WTC11 (cell line): ENCODE measurements at regions of chr11 and their contacts with region 1.

Region 1: DNA sequence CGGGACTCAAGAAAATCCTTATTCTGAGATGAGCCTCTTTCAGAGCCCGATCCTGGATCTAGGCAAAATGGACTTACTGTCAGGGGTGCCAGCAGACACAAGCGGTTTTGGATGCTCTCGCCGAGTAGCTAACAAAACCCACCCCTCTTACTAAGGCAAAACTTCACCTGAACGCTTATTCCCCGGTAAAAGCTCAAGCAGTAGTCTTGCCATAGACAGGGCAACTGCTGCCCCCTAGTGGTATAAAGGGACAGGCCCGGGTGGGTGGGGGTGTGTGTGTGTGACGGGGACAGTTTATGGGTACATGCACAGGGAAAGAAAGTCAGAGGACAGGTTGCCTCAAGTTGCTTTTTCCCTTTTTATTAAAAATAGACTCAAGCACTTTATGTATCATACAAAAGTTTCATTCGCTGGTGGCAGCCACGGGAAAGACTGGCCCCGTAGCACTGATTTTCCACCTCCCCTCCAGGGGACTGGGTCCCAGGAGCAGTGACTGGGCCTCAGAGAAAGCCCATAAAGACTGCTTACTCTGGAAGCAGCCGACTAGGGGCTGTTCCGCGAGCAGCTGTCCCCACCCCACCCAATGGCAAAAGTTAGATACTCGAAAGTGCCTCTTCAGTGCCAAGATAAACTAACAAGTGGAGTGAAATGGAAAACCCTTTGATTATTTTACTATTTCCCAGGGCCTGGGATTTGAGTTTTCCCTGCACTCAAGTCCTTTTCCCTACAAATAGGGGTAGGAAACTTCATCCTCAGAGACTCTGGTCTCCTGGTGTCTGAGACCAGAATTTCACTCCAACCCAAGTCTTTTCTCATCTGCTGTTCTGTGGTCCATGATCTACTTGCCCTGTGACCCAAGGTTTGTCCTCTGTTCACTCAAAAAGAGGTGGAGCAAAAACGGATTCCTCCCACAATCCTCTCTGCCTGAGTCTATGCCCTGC is 4.7 kb downstream of the YPEL4 start:
- DNase-seq: peak; percentile 96
- ATAC-seq: peak; percentile 32
- H3K4me3 Mint-ChIP-seq: peak overlapping the region; percentile 80
- H3K27ac Mint-ChIP-seq: peak overlapping the region; percentile 92
- H3K4me1 Mint-ChIP-seq: peaks cover 94% of the 10 kb centered on the region
- H3K27me3 Mint-ChIP-seq: peaks cover 14% of the 10 kb centered on the region
- CTCF ChIP-seq: peak; percentile 92

Region 2: DNA sequence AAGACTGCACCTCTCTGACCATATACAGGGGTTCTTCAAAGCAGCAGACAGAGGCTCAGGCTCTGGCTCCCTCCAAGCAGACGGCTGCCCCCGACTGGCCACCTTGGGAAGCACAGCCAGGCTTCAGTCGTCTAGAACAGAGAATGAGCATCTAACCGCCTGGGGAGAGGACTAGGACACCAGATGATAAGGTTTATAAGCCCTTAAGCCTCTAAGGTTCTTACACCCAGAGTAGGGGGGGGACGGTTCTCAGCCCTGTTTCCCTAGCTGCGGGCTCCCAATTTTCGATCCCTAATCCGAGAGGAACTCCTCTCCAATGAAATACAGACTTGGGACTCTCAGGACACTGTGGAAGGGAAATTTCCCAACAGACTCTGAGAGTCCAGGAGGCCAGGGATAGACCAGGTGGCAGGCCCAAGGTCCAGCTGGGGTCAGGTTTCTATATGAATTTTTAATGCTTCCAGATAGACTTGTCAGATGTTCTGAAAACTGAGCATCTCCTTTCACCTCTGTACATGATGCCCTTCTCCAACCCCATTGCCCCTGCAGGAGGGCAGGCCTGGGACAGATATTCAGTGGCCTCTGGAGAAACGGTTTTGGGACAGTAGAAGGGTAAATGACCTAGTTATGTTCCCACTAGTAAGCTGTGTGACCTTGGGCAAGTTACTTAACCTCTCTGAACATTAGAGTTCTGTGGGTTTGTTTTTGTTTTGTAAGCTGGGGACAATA is 164.4 kb before region 1 on chr11:
- CTCF ChIA-PET with region 1: interaction called, 15 read pairs
- POLR2A ChIA-PET with region 1: no interaction called
- DNase-seq: peak; percentile 93
- ATAC-seq: peak; percentile 60
- H3K4me3 Mint-ChIP-seq: no peak overlapping the region
- H3K27ac Mint-ChIP-seq: 0 out of 2 replicates have a peak overlapping the region, but pooled peaks have one; percentile 14
- H3K4me1 Mint-ChIP-seq: peaks cover 56% of the 10 kb centered on the region
- H3K27me3 Mint-ChIP-seq: peaks cover 74% of the 10 kb centered on the region
- CTCF ChIP-seq: peak; percentile 73

Region 3: DNA sequence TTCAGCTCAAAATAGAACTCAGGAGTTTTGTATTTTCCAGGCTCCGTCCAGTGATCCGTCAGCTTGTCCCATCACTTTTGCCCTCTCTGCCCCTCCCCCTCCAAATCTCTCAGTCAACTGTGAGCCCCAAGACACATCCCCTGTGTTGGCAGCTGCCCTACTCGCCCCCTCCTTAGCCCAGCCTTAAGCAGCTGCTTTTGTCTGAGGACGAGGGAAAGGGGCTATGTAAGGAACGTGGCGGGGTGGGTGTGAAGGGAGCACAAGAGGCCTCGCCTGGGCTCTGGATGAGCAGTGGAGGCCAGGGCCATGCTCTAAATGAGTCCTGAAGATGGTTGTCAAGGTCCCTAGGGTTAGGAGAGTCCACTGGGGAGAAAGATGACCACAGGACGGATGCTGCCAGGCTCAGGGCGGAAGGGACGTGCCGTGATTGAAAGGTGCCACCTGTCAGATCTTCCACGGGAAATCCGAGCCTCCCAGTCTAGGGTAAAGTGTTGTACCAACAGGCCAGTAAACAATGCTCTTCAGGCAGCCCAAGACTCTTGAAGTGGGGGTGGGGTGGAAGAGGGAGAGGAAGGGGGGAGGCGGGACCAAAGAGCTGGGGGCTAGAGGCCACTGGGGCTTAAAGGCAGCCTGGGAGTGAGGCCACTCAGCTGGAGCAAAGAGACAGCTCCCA is 107.9 kb before region 1 on chr11 and contains the start of gene SMTNL1:
- CTCF ChIA-PET with region 1: interaction called, 14 read pairs
- POLR2A ChIA-PET with region 1: no interaction called
- DNase-seq: no peak
- ATAC-seq: peak; percentile 68
- H3K4me3 Mint-ChIP-seq: no peak within 1 kb of the TSS
- H3K27ac Mint-ChIP-seq: peak within 1 kb of the TSS; percentile 60
- H3K4me1 Mint-ChIP-seq: peaks cover 15% of the 10 kb centered on the region
- H3K27me3 Mint-ChIP-seq: peaks cover 12% of the 10 kb centered on the region
- CTCF ChIP-seq: no peak
- total RNA-seq, gene SMTNL1: 0.26 to 0.39 TPM (median 0.34 TPM) in 3 replicates

Region 4: DNA sequence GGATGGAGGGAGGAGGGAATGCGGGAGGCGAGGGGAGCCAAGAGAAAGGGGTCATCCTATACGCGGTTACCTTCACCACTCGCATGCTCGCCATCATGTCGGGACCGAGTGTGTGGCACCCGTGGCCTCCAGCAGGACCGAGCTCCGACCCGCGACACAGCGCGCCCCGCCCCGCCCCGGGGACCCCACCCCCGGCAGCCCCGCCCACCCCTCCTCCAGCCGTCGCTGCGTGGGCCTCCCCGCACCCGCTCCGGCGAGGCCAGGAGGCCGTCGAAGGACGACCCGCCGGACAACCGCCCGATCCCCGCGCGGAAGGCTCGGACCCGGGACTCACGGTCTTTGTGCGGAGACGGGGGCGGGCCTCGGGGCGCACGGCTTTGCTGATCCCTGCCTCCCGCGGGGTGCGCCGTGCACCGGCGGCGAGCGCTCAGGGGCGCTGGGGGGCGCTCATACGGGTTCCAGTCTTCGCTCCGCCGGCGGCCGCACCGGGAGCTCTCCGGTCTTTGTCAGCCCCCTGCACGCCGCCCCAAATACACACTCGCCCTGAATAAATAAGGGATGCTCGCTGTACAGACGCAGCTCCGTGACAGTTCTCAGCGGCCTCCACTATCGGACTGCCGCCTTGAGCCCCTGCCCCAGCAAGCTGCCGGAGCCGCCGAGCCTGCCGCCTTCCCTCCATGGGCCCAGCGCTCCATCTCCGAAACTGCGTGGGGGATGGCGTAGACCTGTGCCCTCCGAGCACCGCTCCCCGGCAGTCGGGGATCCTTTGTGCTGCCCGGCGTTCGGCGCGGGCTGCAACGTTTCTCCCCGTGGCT is 77.3 kb before region 1 on chr11 and contains the start of gene UBE2L6:
- CTCF ChIA-PET with region 1: interaction called, 363 read pairs
- POLR2A ChIA-PET with region 1: interaction called, 43 read pairs
- DNase-seq: peak; percentile 91
- ATAC-seq: peak; percentile 82
- H3K4me3 Mint-ChIP-seq: peak within 1 kb of the TSS; percentile 95
- H3K27ac Mint-ChIP-seq: peak within 1 kb of the TSS; percentile 89
- H3K4me1 Mint-ChIP-seq: peaks cover 28% of the 10 kb centered on the region
- H3K27me3 Mint-ChIP-seq: peaks cover 7% of the 10 kb centered on the region
- CTCF ChIP-seq: no peak
- total RNA-seq, gene UBE2L6: 38.8 to 48.5 TPM (median 47.4 TPM) in 3 replicates

Region 5: GRCh38 chr11:57597916-57598830 is 46.8 kb before region 1 on chr11:
- CTCF ChIA-PET with region 1: interaction called, 78 read pairs
- POLR2A ChIA-PET with region 1: interaction called, 115 read pairs
- DNase-seq: peak; percentile 89
- ATAC-seq: peak; percentile 84
- H3K4me3 Mint-ChIP-seq: peak overlapping the region; percentile 70
- H3K27ac Mint-ChIP-seq: peak overlapping the region; percentile 38
- H3K4me1 Mint-ChIP-seq: peaks cover 35% of the 10 kb centered on the region
- H3K27me3 Mint-ChIP-seq: no peaks in the 10 kb centered on the region
- CTCF ChIP-seq: no peak

Region 6: GRCh38 chr11:57614234-57614772 is 30.7 kb before region 1 on chr11:
- CTCF ChIA-PET with region 1: interaction called, 16 read pairs
- POLR2A ChIA-PET with region 1: interaction called, 4 read pairs
- DNase-seq: no peak
- ATAC-seq: peak; percentile 28; the same call in 1 of the 2 replicates
- H3K4me3 Mint-ChIP-seq: no peak overlapping the region
- H3K27ac Mint-ChIP-seq: no peak overlapping the region
- H3K4me1 Mint-ChIP-seq: peaks cover 13% of the 10 kb centered on the region
- H3K27me3 Mint-ChIP-seq: no peaks in the 10 kb centered on the region
- CTCF ChIP-seq: no peak

Region 7: GRCh38 chr11:57657194-57658022 is 12.4 kb after region 1 on chr11 and contains the start of gene CLP1:
- CTCF ChIA-PET with region 1: interaction called, 13 read pairs
- POLR2A ChIA-PET with region 1: interaction called, 3 read pairs
- DNase-seq: peak; percentile 100
- ATAC-seq: peak; percentile 96
- H3K4me3 Mint-ChIP-seq: peak within 1 kb of the TSS; percentile 99
- H3K27ac Mint-ChIP-seq: peak within 1 kb of the TSS; percentile 95
- H3K4me1 Mint-ChIP-seq: peaks cover 22% of the 10 kb centered on the region
- H3K27me3 Mint-ChIP-seq: peaks cover 41% of the 10 kb centered on the region
- CTCF ChIP-seq: no peak
- total RNA-seq, gene CLP1: 24.5 to 26.3 TPM (median 24.6 TPM) in 3 replicates

Region 8: DNA sequence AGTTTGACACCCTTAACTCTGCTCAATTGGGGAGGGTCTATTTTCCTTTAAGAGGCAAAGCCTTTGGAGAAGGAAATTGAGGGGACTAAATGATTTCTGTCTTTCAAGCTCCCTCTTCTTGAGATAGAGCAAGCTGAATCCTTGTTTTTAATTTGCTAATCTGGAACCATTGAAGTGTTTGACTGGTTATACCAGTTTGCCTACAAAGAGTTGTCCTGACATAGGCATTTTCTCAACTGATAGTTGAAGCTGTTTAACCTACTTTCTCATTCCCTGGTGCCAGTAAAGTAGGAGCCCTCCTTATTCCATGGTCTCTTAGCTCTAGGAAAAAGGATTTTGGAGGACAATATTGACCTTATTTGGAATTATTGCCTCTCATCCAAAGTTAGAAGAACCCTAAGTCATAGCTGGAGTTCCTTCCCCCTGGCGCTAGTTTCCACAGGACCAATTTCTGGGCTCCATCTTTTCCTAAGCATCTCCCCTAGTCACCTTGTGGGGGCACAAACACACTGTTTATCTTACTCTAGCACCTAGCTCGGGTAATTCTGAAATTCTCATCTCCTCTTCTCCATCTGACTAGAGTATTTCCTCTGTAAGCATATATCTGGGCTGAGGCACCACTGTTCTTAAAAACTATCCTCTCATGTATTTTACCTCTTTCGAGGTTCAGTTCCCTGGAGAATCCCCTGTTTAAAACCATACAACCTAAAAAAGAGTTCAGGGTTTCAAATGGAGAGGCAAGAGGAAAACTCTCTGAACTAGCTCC is 30.3 kb after region 1 on chr11:
- CTCF ChIA-PET with region 1: no interaction called
- POLR2A ChIA-PET with region 1: no interaction called
- DNase-seq: no peak
- ATAC-seq: no peak
- H3K4me3 Mint-ChIP-seq: no peak overlapping the region
- H3K27ac Mint-ChIP-seq: peak overlapping the region; percentile 2; the same call in 1 of the 2 replicates
- H3K4me1 Mint-ChIP-seq: peaks cover 38% of the 10 kb centered on the region
- H3K27me3 Mint-ChIP-seq: no peaks in the 10 kb centered on the region
- CTCF ChIP-seq: no peak